Calu3 (cell line): ENCODE measurements at regions of chr17 and their contacts with region 1.

Region 1: GRCh38 chr17:37373530-37374159 is 2.1 kb upstream of the C17orf78 start:
- DNase-seq: peak; percentile 95
- H3K4me3 Mint-ChIP-seq: no peak overlapping the region
- H3K27ac Mint-ChIP-seq: no peak overlapping the region
- H3K4me1 Mint-ChIP-seq: peaks cover 9% of the 10 kb centered on the region
- H3K27me3 Mint-ChIP-seq: no peaks in the 10 kb centered on the region
- CTCF ChIP-seq: peak; percentile 100

Region 2: GRCh38 chr17:36629252-36629847 is 744.3 kb before region 1 on chr17:
- CTCF ChIA-PET with region 1: interaction called, 3 read pairs
- intact Hi-C with region 1: loop called (anchors 1 kb)
- DNase-seq: peak; percentile 99
- H3K4me3 Mint-ChIP-seq: no peak overlapping the region
- H3K27ac Mint-ChIP-seq: no peak overlapping the region
- H3K4me1 Mint-ChIP-seq: no peaks in the 10 kb centered on the region
- H3K27me3 Mint-ChIP-seq: peaks cover 53% of the 10 kb centered on the region
- CTCF ChIP-seq: peak; percentile 100

Region 3: GRCh38 chr17:37276527-37276926 is 97.1 kb before region 1 on chr17:
- CTCF ChIA-PET with region 1: interaction called, 8 read pairs
- intact Hi-C with region 1: loop called (anchors 2 kb)
- DNase-seq: peak; percentile 42
- H3K4me3 Mint-ChIP-seq: no peak overlapping the region
- H3K27ac Mint-ChIP-seq: peak overlapping the region; percentile 18
- H3K4me1 Mint-ChIP-seq: peaks cover 30% of the 10 kb centered on the region
- H3K27me3 Mint-ChIP-seq: no peaks in the 10 kb centered on the region
- CTCF ChIP-seq: no peak

Region 4: GRCh38 chr17:37358830-37359681 is 14.6 kb before region 1 on chr17:
- CTCF ChIA-PET with region 1: interaction called, 98 read pairs
- intact Hi-C with region 1: no loop called
- DNase-seq: peak; percentile 100
- H3K4me3 Mint-ChIP-seq: peak overlapping the region; percentile 100
- H3K27ac Mint-ChIP-seq: peak overlapping the region; percentile 90
- H3K4me1 Mint-ChIP-seq: peaks cover 45% of the 10 kb centered on the region
- H3K27me3 Mint-ChIP-seq: no peaks in the 10 kb centered on the region
- CTCF ChIP-seq: peak; percentile 97

Region 5: DNA sequence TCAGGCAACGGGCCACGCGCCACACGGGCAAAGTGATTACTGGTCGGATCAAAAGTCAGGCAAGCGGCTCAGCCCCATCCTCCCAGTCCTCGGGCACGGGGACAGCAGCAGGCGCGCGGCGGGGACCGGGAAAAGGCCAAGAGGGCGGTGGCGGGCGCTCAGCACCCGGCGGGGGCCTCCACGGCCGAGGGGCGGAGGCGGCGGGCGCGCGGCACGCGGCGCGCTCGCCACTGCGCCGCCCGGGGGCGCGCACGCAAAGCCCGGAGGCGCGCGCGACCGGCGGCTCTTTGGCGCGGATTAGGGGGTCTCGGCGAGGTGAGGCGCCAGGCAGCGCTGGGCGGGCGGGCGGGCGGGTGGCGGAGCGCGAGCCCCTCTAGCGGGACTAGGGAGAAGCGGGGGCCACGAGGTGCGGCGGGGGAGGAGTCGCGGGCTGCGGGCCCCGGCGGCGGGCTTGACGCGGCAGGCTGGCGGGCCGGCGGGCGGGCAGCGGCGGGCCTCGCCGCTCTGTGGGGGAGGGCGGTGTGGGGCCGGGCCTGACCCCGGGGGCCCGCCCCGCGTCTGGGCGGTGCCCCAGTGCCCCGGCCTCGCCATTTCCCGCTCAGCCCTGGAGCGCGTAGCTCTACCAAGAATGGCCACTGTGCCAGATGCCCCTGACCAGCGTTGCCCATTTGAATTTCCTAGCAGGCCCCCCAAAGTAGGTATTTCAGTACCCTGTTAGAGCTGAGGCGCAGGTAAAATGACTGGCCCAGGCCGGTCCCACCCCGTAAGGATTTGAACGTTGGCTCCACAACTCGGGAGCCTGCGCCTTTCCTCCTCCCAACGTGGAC is 33.2 kb after region 1 on chr17 and contains the starts of genes ACACA and TADA2A:
- CTCF ChIA-PET with region 1: interaction called, 20 read pairs
- intact Hi-C with region 1: no loop called
- DNase-seq: peak; percentile 99
- H3K4me3 Mint-ChIP-seq: peak within 1 kb of the TSS; percentile 96
- H3K27ac Mint-ChIP-seq: peak within 1 kb of the TSS; percentile 86
- H3K4me1 Mint-ChIP-seq: peaks cover 22% of the 10 kb centered on the region
- H3K27me3 Mint-ChIP-seq: no peaks in the 10 kb centered on the region
- CTCF ChIP-seq: peak; percentile 59
- total RNA-seq, gene ACACA: 335 and 392 TPM in 2 replicates
- total RNA-seq, gene TADA2A: 97.6 and 102 TPM in 2 replicates

Region 6: DNA sequence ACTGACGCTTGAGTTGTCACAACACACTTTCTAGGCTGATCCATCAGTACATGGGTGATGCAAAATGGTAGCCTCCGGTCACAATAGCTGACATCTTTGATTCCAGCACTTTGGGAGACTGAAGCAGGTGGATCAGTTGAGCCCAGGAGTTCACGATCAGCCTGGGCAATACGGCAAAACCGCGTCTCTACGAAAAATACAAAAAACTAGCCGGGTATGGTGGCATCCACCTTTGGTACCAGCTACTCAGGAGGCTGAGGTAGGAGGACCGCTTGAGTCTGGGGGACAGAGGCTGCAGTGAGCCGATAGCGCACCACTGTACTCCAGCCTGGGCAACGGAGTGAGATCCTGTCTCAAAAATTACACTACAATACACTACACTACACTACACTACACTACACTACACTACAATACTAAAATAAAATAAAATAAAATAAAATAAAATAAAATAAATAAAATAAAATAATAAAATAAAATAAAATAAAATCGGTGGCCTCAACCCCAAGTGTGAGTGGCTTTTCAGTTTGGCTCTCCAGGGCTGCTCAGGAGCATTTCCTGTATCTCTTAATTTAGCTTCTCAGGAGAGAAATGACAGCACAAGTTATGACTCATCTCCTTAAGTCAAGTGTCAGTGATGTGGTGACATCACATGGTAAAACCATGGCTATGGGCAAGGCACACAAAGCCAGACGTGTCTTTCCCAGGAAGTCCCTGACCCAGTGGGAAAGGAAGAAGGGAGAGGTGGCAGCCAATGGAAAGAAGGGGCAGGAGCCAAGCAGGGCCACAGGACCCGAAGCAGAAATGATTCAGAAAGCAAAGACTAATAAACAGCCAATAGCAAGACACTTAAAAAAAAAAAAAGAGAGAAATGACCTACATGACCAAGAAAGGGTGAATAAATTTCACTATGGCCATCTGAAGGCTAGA is 475.3 kb after region 1 on chr17:
- CTCF ChIA-PET with region 1: no interaction called
- intact Hi-C with region 1: no loop called
- DNase-seq: peak; percentile 73
- H3K4me3 Mint-ChIP-seq: no peak overlapping the region
- H3K27ac Mint-ChIP-seq: peak overlapping the region; percentile 21
- H3K4me1 Mint-ChIP-seq: peaks cover 9% of the 10 kb centered on the region
- H3K27me3 Mint-ChIP-seq: no peaks in the 10 kb centered on the region
- CTCF ChIP-seq: no peak